CD8-positive, alpha-beta T cell (primary cell): ENCODE measurements at regions of chr7 and their contacts with region 1.

Region 1: GRCh38 chr7:974820-975681 is at the start of gene COX19:
- DNase-seq: peak; percentile 83 to 95 (median 90)
- ATAC-seq: peak; percentile 87
- H3K4me3 ChIP-seq: peak within 1 kb of the TSS; percentile 95 to 100
- H3K4me3 Mint-ChIP-seq: peak within 1 kb of the TSS; percentile 89
- H3K27ac ChIP-seq: peak within 1 kb of the TSS; percentile 98 to 99
- H3K27ac Mint-ChIP-seq: peak within 1 kb of the TSS; percentile 95
- H3K4me1 ChIP-seq: peaks cover 28% of the 10 kb centered on the region
- H3K4me1 Mint-ChIP-seq: peaks cover 31% of the 10 kb centered on the region
- H3K27me3 ChIP-seq: no peaks in the 10 kb centered on the region
- H3K27me3 Mint-ChIP-seq: no peaks in the 10 kb centered on the region
- CTCF ChIP-seq: no peak
- total RNA-seq, gene COX19: 40.3 to 42.4 TPM

Region 2: DNA sequence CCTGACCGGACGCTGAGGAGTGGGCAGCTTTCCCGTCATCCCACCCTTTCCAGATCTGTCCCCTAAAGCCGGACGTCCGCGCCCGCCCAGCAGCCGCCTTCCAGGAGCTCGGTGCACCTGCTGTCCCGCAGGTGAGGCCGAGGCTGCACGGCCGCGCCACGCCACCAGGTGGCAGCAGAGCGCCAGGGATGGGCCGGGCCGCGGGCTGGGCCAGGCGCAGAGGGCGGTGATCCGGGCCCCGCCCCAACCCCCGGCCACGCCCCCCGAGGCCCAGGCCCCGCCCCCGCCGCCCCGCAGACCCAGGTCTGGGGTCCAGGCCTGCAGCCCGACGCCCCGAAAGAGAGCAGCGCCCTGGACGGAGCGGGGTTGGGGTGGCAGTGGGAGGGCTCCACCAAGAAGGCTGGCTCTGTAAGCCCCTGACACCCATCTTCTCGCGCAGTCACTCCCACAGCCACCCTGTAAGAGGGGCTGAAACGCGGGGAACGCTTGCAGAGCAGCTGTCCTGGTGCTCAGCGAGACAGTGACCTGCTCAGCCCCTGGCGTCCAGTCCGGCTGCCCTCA is 652.9 kb before region 1 on chr7:
- CTCF ChIA-PET with region 1: no interaction called
- POLR2A ChIA-PET with region 1: no interaction called
- intact Hi-C with region 1: loop called (anchors 1 to 10 kb)
- DNase-seq: peak; percentile 73 to 94 (median 86)
- ATAC-seq: peak; percentile 100
- H3K4me3 ChIP-seq: no peak overlapping the region
- H3K4me3 Mint-ChIP-seq: no peak overlapping the region
- H3K27ac ChIP-seq: no peak overlapping the region
- H3K27ac Mint-ChIP-seq: no peak overlapping the region
- H3K4me1 ChIP-seq: peaks cover 4% of the 10 kb centered on the region
- H3K4me1 Mint-ChIP-seq: no peaks in the 10 kb centered on the region
- H3K27me3 ChIP-seq: no peaks in the 10 kb centered on the region
- H3K27me3 Mint-ChIP-seq: peaks cover 27% of the 10 kb centered on the region
- CTCF ChIP-seq: peak; percentile 82

Region 3: GRCh38 chr7:909358-910329 is 65.4 kb before region 1 on chr7:
- CTCF ChIA-PET with region 1: interaction called, 10 read pairs
- POLR2A ChIA-PET with region 1: interaction called, 3 read pairs
- intact Hi-C with region 1: loop called (anchors 1 kb)
- DNase-seq: peak in 6 of 9 experiments; percentile 30 to 64 (median 47)
- ATAC-seq: peak; percentile 19
- H3K4me3 ChIP-seq: peak overlapping the region in 1 of 2 experiments; percentile 48
- H3K4me3 Mint-ChIP-seq: peak overlapping the region; percentile 55
- H3K27ac ChIP-seq: no peak overlapping the region
- H3K27ac Mint-ChIP-seq: peak overlapping the region; percentile 75
- H3K4me1 ChIP-seq: peaks cover 15% of the 10 kb centered on the region
- H3K4me1 Mint-ChIP-seq: peaks cover 9% of the 10 kb centered on the region
- H3K27me3 ChIP-seq: no peaks in the 10 kb centered on the region
- H3K27me3 Mint-ChIP-seq: no peaks in the 10 kb centered on the region
- CTCF ChIP-seq: no peak

Region 4: GRCh38 chr7:954330-955238 is 20.5 kb before region 1 on chr7 and contains the start of gene ADAP1:
- CTCF ChIA-PET with region 1: interaction called, 7 read pairs
- POLR2A ChIA-PET with region 1: interaction called, 3 read pairs
- intact Hi-C with region 1: loop called in 1 of 2 experiments (anchors 1 kb)
- DNase-seq: peak in 8 of 9 experiments; percentile 45 to 87 (median 60)
- ATAC-seq: peak; percentile 83
- H3K4me3 ChIP-seq: peak within 1 kb of the TSS in 1 of 2 experiments; percentile 45
- H3K4me3 Mint-ChIP-seq: peak within 1 kb of the TSS; percentile 70
- H3K27ac ChIP-seq: no peak within 1 kb of the TSS
- H3K27ac Mint-ChIP-seq: peak within 1 kb of the TSS; percentile 70
- H3K4me1 ChIP-seq: no peaks in the 10 kb centered on the region
- H3K4me1 Mint-ChIP-seq: peaks cover 9% of the 10 kb centered on the region
- H3K27me3 ChIP-seq: no peaks in the 10 kb centered on the region
- H3K27me3 Mint-ChIP-seq: no peaks in the 10 kb centered on the region
- CTCF ChIP-seq: no peak
- total RNA-seq, gene ADAP1: 10.9 to 11.5 TPM

Region 5: GRCh38 chr7:1044191-1045068 is 69.4 kb after region 1 on chr7 and contains the start of gene GPR146:
- CTCF ChIA-PET with region 1: no interaction called
- POLR2A ChIA-PET with region 1: no interaction called
- intact Hi-C with region 1: loop called (anchors 1 kb)
- DNase-seq: peak; percentile 76 to 97 (median 91)
- ATAC-seq: peak; percentile 88
- H3K4me3 ChIP-seq: peak within 1 kb of the TSS; percentile 57 to 71
- H3K4me3 Mint-ChIP-seq: peak within 1 kb of the TSS; percentile 84
- H3K27ac ChIP-seq: peak within 1 kb of the TSS; percentile 51 to 57
- H3K27ac Mint-ChIP-seq: peak within 1 kb of the TSS; percentile 52
- H3K4me1 ChIP-seq: peaks cover 53% of the 10 kb centered on the region
- H3K4me1 Mint-ChIP-seq: peaks cover 63% of the 10 kb centered on the region
- H3K27me3 ChIP-seq: no peaks in the 10 kb centered on the region
- H3K27me3 Mint-ChIP-seq: no peaks in the 10 kb centered on the region
- CTCF ChIP-seq: peak; percentile 60
- total RNA-seq, gene GPR146: 4.4 to 5.0 TPM

Region 6: DNA sequence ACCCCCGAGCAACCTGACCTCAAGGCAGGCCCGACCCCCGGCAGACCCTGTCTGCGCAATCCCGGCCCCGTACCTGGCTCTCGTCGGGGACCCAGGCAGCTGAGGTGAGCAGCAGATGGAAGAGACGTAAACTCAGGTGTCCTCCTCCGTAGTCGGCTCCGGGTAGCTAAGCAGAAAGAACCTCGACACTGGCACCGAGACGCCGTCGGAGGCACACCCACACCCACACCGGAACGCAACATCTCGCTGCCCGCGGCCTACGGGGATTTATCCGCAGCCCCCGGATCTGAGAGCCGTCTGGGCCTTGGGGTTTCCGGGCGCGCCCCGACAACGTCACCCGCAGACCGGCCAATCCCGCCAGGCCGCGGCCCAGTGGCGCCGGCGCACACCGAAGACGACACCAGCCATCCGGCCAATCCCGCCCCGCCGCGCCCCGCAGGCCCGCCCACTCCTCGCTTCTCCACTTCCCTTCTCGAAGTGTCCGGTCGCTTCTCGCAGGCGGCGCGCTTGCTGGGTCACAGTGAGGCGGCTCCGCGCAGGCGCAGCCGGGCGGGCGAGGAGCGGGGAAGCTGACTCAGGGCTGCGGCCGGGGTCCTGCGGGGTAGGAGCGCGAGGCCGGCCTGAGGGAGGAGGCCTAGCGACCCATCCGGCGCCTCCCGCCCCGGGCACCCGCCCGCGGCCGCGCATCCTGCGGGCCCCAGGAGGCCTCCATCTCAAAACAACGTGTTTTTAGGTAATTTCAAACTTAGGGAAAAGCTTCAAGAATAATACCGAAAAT is 185.0 kb after region 1 on chr7 and contains the start of gene ZFAND2A:
- CTCF ChIA-PET with region 1: no interaction called
- POLR2A ChIA-PET with region 1: no interaction called
- intact Hi-C with region 1: loop called in 1 of 2 experiments (anchors 1 kb)
- DNase-seq: peak; percentile 97 to 99 (median 99)
- ATAC-seq: peak; percentile 98
- H3K4me3 ChIP-seq: peak within 1 kb of the TSS; percentile 98
- H3K4me3 Mint-ChIP-seq: peak within 1 kb of the TSS; percentile 90
- H3K27ac ChIP-seq: peak within 1 kb of the TSS; percentile 96 to 99
- H3K27ac Mint-ChIP-seq: peak within 1 kb of the TSS; percentile 95
- H3K4me1 ChIP-seq: peaks cover 22% of the 10 kb centered on the region
- H3K4me1 Mint-ChIP-seq: peaks cover 27% of the 10 kb centered on the region
- H3K27me3 ChIP-seq: no peaks in the 10 kb centered on the region
- H3K27me3 Mint-ChIP-seq: no peaks in the 10 kb centered on the region
- CTCF ChIP-seq: no peak
- total RNA-seq, gene ZFAND2A: 100 to 105 TPM

Region 7: DNA sequence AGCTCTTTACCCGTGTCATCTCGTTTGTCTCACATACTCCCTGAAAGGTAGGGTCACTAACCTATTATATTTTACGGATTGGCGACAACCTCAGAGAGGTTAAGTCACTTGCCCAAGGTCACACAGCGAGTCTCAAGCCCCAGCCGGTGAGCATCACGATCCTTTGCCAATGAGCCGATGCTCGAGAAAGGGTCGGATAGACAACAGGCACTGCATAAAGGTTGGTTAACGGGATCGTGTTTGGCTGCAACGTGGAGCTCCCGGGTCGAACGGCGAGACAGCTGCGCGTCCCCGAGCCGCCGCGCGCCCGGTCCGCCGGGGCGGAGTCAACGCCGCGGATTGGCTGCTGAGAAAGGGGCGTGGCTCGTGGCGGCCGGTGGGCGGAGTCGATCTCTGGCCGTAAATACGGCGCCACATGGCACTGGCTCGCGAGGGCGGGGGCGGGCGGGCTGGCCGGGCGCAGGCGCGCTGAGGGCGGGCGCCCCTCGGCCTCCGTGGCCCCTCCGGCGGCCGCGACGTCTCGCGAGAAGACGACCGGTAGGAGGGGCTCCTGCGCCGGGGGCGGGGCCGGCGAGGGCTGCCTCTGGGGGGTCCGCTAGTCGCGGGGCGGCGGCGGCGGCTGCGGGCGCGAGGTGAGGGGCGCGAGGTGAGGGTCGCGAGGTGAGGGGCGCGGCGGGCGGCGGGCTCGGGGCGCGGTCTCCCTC is 1428.1 kb after region 1 on chr7 and contains the start of gene CHST12:
- CTCF ChIA-PET with region 1: no interaction called
- POLR2A ChIA-PET with region 1: no interaction called
- intact Hi-C with region 1: loop called in 1 of 2 experiments (anchors 5 kb)
- DNase-seq: peak; percentile 87 to 99 (median 94)
- ATAC-seq: peak; percentile 78
- H3K4me3 ChIP-seq: peak within 1 kb of the TSS; percentile 84
- H3K4me3 Mint-ChIP-seq: peak within 1 kb of the TSS; percentile 84
- H3K27ac ChIP-seq: peak within 1 kb of the TSS; percentile 49 to 66
- H3K27ac Mint-ChIP-seq: peak within 1 kb of the TSS; percentile 88
- H3K4me1 ChIP-seq: peaks cover 53% of the 10 kb centered on the region
- H3K4me1 Mint-ChIP-seq: peaks cover 50% of the 10 kb centered on the region
- H3K27me3 ChIP-seq: no peaks in the 10 kb centered on the region
- H3K27me3 Mint-ChIP-seq: no peaks in the 10 kb centered on the region
- CTCF ChIP-seq: no peak
- total RNA-seq, gene CHST12: 10.3 to 11.7 TPM